Panc1 (cell line): ENCODE measurements at regions of chr15 and their contacts with region 1.

Region 1: DNA sequence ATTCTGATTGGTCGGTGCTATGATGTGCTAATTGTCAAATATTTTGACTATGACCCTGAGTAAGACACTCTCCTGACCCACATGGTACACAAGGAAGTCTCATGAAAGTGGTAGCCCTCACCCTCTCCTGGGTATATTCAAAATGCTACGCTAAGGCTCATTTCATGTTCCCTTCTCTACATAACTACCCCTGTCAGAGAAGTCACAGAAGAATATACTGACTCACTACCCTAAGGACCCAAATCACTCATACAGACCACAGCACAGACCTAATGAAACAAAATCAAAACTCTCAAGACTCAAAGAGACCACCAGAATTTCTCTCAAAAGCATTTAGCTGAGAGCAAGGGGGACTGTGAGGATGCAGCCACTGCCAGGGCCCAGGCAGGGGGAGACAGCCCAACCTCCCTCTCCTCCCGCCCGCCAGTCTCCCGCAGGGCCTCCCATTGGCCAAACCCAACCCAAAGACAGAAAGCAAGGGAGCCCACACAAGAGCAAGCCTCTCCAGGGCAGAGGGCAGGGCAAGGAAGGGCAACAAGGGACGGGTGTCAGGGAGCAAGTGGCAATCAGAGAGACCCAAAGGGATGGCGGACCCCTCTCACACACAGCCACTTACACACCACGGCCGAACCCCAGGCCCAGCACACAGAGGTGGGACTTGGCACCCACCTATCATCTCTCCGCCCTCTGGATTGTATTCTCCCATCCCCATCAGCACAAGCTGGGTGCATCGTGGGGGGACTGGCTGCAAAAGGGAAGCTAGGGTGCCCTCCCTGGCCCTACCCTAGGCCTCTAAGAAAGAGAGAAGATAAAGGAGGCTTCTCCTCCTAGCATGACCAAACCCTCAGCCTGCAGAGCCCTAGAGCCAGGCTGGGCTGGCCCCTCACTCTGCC is 41.6 kb downstream of the MEGF11 start:
- DNase-seq: no peak
- ATAC-seq: no peak
- H3K4me3 ChIP-seq: no peak overlapping the region
- H3K27ac ChIP-seq: no peak overlapping the region
- H3K4me1 ChIP-seq: no peaks in the 10 kb centered on the region
- H3K27me3 ChIP-seq: peaks cover 2% of the 10 kb centered on the region; the same call in 1 of the 2 replicates
- CTCF ChIP-seq: no peak

Region 2: GRCh38 chr15:65598468-65598867 is 613.4 kb before region 1 on chr15:
- CTCF ChIA-PET with region 1: no interaction called
- POLR2A ChIA-PET with region 1: interaction called, 10 read pairs
- in situ Hi-C with region 1: no loop called
- intact Hi-C with region 1: no loop called
- DNase-seq: no peak
- ATAC-seq: no peak
- H3K4me3 ChIP-seq: no peak overlapping the region
- H3K27ac ChIP-seq: no peak overlapping the region
- H3K4me1 ChIP-seq: no peaks in the 10 kb centered on the region
- H3K27me3 ChIP-seq: no peaks in the 10 kb centered on the region
- CTCF ChIP-seq: no peak

Region 3: GRCh38 chr15:66196602-66197001 is 15.3 kb before region 1 on chr15:
- CTCF ChIA-PET with region 1: no interaction called
- POLR2A ChIA-PET with region 1: no interaction called
- in situ Hi-C with region 1: no loop called
- intact Hi-C with region 1: no loop called
- DNase-seq: no peak
- ATAC-seq: no peak
- H3K4me3 ChIP-seq: no peak overlapping the region
- H3K27ac ChIP-seq: no peak overlapping the region
- H3K4me1 ChIP-seq: no peaks in the 10 kb centered on the region
- H3K27me3 ChIP-seq: no peaks in the 10 kb centered on the region
- CTCF ChIP-seq: no peak